Activated T-helper 1 cell treated with anti-CD3 and anti-CD28 coated beads, Interleukin-12 subunit alpha, Interleukin-12 subunit beta, Interleukin-2, Interleukin-4 antibody, amounts not matched to agents 30 ng/mL and 10 ng/mL and 1 ng/mL, durations not matched to agents 14 hours and 24 hours and 36 hours (primary cell): ENCODE measurements at regions of chr16 and their contacts with region 1.

Region 1: DNA sequence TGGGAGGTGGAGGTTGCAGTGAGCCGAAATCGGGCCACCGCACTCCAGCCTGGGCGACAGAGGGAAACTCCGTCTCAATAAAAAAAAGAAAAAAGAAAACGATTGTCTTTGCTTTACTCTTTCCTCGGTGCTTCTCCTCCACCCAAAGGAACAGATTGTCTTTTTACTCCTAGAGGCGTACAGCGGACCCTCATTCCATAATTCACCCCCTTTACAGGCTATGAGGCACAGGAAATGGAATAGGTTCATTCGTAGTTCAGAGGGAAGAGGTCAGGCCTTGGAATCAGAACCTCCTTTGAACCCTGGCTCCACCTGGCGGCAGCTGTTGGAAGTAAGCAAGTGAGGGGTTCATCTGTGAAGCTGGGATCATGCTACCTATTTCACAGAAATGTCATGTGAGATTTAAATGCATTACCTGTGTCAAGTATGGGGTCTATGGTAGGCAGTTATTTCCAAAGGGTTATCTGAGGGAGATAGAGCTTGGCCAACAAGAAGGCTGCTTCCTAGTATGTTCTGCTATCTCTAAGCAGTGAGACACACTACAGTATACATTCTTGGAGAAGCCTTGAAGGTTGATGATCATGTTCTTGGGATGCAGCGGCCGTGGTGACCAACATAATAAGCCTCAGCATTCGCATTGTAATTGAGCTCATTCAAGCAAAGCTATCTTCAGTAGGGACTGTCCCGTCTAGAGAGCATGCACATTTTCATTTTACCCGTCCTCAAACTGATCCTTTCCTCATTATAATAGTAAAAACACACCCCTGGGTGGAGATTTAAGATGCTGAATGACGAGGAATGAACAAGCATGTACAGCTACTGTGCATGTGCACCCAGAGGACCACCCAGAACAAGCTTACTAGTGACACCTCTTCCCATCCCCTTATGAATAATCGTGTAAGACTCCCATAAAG is 18.7 kb upstream of the ZNF689 start:
- DNase-seq: peak; percentile 77
- H3K4me3 Mint-ChIP-seq: peak overlapping the region; percentile 52
- H3K27ac Mint-ChIP-seq: peak overlapping the region; percentile 71
- H3K4me1 Mint-ChIP-seq: peaks cover 10% of the 10 kb centered on the region
- H3K27me3 Mint-ChIP-seq: no peaks in the 10 kb centered on the region

Region 2: DNA sequence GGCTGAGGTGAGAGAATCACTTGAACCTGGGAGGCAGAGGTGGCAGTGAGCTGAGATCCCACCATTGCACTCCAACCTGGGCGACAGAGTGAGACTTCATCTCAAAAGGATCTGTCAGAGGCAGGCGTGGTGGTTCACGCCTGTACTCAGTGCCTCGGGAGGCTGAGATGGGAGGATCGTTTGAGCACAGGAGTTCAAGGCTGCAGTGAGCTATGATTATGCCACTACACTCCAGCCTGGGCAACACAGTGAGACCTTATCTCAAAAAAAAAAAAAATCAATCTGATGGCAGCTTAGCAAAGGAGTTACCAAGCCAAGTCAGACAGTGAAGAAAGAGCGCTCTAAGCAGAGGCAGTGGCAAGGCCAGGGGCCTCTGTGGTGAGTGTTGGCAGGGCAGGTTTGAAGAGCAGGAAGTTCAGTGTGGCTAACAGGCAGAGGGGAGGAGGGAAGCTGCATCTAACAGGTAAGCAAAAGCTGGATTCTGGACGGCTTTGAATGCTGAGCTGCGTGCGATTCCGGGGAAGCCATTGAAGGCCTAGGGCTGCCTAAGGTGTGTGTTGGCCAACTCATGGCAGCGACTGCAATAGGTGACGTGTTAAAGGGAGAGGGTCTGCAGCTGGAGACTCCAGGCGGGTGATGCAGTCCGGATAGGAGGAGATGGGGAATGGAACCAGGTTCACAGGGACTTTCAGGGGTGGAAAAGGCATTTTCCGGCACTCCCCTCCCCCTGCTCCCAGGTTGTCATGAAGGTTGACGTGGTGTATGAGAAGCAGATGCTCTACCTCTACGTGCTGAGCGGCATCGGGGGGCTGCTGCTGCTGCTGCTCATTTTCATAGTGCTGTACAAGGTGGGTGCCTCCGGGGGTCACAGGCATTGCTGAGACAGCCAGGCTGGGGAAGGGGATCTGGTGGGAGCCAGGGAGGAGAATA is 109.5 kb before region 1 on chr16:
- intact Hi-C with region 1: no loop called
- DNase-seq: no peak
- H3K4me3 Mint-ChIP-seq: no peak overlapping the region
- H3K27ac Mint-ChIP-seq: peak overlapping the region; percentile 50
- H3K4me1 Mint-ChIP-seq: peaks cover 4% of the 10 kb centered on the region
- H3K27me3 Mint-ChIP-seq: no peaks in the 10 kb centered on the region

Region 3: DNA sequence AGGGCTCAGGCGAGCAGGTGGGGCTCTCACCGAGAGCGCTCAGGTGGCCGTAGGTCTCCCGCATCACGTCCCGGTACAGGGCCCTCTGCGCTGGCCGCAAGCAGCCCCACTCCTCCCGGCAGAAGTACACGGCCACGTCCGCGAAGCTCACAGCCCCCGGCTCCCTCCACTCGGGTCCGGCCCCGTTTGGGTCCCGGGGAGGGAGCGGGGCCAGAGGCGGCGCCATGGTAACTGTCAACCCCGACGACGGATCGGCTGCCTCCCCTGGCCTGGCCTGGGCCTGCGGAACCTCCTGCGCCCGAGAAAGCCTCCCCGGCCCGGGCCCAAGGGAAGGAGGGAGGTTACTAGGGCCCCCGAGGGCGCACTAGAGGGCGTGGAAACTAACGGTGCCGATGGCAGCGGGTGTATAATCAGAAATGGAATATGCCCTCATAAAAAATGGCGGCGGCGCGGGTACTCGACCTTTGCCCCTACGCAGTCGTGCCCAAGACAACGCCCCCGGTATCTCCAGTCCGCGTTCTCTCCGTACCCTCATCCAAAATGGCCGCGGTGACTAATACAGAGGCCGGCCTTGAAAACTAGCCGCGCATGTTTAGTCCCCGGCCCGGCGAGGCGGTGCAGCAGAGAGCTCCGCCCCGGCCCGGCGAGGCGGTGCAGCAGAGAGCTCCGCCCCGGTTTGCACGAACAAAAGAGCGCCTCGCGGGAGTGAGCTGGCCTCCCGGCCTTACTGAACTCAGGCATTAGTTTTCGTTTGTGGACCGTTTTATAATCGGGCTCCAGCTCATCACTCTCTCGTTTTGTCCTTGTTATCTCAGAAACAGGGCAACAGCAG is 70.7 kb before region 1 on chr16 and contains the start of gene ZNF764:
- intact Hi-C with region 1: loop called (anchors 1 kb)
- DNase-seq: peak; percentile 97
- H3K4me3 Mint-ChIP-seq: peak within 1 kb of the TSS; percentile 90
- H3K27ac Mint-ChIP-seq: peak within 1 kb of the TSS; percentile 92
- H3K4me1 Mint-ChIP-seq: peaks cover 42% of the 10 kb centered on the region
- H3K27me3 Mint-ChIP-seq: no peaks in the 10 kb centered on the region
- total RNA-seq, gene ZNF764: 17.9 and 21.2 TPM in 2 replicates

Region 4: GRCh38 chr16:30669896-30670797 is 41.3 kb after region 1 on chr16:
- intact Hi-C with region 1: no loop called
- DNase-seq: no peak
- H3K4me3 Mint-ChIP-seq: no peak overlapping the region
- H3K27ac Mint-ChIP-seq: no peak overlapping the region
- H3K4me1 Mint-ChIP-seq: peaks cover 6% of the 10 kb centered on the region
- H3K27me3 Mint-ChIP-seq: no peaks in the 10 kb centered on the region